PC-3 (cell line): ENCODE measurements at regions of chr2 and their contacts with region 1.

Region 1: DNA sequence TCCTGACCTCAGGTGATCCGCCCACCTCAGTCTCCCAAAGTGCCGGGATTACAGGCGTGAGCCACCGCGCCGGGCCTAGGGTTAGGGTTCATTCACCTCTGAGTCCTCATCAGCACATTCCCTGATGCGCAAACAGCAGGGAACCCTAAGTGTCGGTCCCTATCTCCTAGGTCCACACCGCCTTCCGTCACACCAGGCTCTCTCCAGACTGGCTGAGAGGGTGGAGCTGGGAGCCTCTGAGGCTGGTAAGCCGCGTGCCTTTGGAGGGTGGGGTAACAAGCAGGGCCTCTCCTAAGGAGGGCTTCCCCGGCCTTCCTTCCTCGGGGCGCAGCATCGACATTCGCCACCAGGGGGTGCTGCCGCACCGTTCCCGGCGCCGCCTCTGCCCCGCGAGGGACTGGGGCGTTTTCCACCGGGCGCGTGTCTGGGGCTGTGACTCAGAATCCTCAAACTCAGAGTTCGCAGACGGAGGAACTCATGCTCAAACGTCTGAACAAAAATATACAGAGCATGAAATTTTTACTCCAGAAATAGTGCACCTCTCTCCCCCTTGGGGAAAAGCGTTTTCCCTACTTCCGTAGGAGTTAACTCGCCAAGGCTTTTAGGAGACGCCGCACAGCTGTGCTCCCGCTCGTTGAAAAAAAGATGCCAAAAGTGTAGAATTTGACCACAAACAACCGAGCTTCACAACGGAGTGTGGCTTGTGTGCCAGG is 63.9 kb upstream of the ASAP2 start:
- DNase-seq: peak; percentile 94
- ATAC-seq: peak; percentile 86
- H3K4me3 ChIP-seq: peak overlapping the region; percentile 54
- H3K27ac ChIP-seq: peak overlapping the region; percentile 67
- H3K4me1 ChIP-seq: peaks cover 28% of the 10 kb centered on the region
- H3K27me3 ChIP-seq: no peaks in the 10 kb centered on the region
- CTCF ChIP-seq: peak; percentile 98

Region 2: DNA sequence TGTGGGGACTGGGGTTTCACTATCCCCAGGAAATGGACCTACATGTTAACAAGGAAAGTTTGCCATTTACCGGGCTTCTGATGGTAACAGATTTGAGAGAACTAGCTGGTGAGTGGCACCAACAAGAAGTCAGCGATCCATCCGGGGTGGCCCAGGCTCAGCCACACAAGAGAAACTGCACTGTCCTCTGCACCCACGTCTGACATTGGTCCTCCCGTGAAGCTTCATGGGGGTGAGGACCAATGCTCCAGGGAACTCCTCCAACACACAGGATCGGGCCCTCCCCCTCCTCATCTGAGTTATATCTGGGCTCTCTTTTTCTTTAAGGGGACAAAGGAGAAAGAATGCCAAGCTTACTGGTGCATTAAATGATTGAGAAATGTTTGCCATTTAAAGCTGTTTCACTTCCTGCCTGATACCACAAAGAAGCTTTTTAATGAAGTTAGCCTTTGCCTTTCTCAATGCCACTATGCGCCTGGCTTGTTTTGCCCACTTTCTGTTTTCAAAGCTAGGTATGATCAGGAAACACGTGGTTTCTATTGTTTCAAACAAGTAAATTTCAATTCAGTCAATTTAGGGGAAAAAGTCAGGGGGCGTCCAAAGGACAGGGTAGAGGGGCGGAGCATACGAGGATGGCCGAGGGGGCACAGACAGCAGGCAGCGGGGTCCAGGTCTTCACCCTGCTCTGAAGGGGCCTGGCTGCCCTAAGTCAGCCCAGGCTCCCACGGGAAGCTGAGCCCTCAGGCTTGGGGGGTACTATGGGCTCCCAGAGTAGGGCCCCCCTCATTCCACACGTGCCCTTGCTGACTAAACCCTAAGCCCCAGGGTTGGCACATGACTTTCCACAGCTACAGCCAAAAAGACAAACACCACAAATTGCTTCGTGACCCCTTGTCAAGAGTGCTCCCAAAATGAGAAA is 664.9 kb before region 1 on chr2:
- CTCF ChIA-PET with region 1: no interaction called
- POLR2A ChIA-PET with region 1: no interaction called
- intact Hi-C with region 1: no loop called
- DNase-seq: peak; percentile 30
- ATAC-seq: no peak
- H3K4me3 ChIP-seq: no peak overlapping the region
- H3K27ac ChIP-seq: no peak overlapping the region
- H3K4me1 ChIP-seq: peaks cover 28% of the 10 kb centered on the region
- H3K27me3 ChIP-seq: no peaks in the 10 kb centered on the region
- CTCF ChIP-seq: no peak

Region 3: GRCh38 chr2:8872821-8873432 is 269.8 kb before region 1 on chr2:
- CTCF ChIA-PET with region 1: interaction called, 5 read pairs
- POLR2A ChIA-PET with region 1: no interaction called
- intact Hi-C with region 1: loop called (anchors 1 kb)
- DNase-seq: peak; percentile 70
- ATAC-seq: 0 out of 2 replicates have a peak, but pooled peaks have one; percentile 40
- H3K4me3 ChIP-seq: no peak overlapping the region
- H3K27ac ChIP-seq: no peak overlapping the region
- H3K4me1 ChIP-seq: 0 out of 2 replicates have a peak, but pooled peaks cover 4% of the 10 kb centered on the region
- H3K27me3 ChIP-seq: no peaks in the 10 kb centered on the region
- CTCF ChIP-seq: peak; percentile 77

Region 4: GRCh38 chr2:9152975-9153642 is 10.4 kb after region 1 on chr2:
- CTCF ChIA-PET with region 1: interaction called, 15 read pairs
- POLR2A ChIA-PET with region 1: no interaction called
- intact Hi-C with region 1: no loop called
- DNase-seq: no peak
- ATAC-seq: no peak
- H3K4me3 ChIP-seq: no peak overlapping the region
- H3K27ac ChIP-seq: no peak overlapping the region
- H3K4me1 ChIP-seq: no peaks in the 10 kb centered on the region
- H3K27me3 ChIP-seq: no peaks in the 10 kb centered on the region
- CTCF ChIP-seq: no peak

Region 5: GRCh38 chr2:9206991-9207640 is 64.4 kb after region 1 on chr2:
- CTCF ChIA-PET with region 1: interaction called, 3 read pairs
- POLR2A ChIA-PET with region 1: interaction called, 7 read pairs
- intact Hi-C with region 1: loop called (anchors 2 kb)
- DNase-seq: no peak
- ATAC-seq: peak; percentile 9
- H3K4me3 ChIP-seq: peak overlapping the region; percentile 89
- H3K27ac ChIP-seq: peak overlapping the region; percentile 80
- H3K4me1 ChIP-seq: peaks cover 34% of the 10 kb centered on the region
- H3K27me3 ChIP-seq: no peaks in the 10 kb centered on the region
- CTCF ChIP-seq: no peak

Region 6: DNA sequence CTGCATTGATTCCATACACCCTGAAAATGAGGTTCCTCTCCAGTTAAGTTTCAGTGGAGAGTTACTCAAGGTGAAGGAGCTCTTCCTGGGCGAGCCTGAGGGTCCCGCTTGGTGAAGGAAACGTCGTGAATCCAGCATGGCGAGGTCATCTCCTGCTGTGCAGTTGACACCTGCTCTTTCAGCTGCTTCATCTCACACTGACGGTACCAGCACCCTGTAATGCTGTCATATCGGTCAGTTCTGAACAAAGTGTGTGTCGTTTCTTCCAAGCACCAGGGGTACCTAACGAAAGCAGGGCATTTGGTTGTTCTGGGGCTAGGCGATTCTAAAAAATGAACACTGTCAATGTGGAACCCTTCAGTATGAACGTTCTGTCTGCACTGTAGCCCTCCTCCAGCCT is 228.0 kb after region 1 on chr2:
- CTCF ChIA-PET with region 1: no interaction called
- POLR2A ChIA-PET with region 1: no interaction called
- intact Hi-C with region 1: loop called (anchors 1 kb)
- DNase-seq: no peak
- ATAC-seq: no peak
- H3K4me3 ChIP-seq: no peak overlapping the region
- H3K27ac ChIP-seq: peak overlapping the region; percentile 84
- H3K4me1 ChIP-seq: peaks cover 28% of the 10 kb centered on the region
- H3K27me3 ChIP-seq: no peaks in the 10 kb centered on the region
- CTCF ChIP-seq: no peak